CD4-positive, alpha-beta memory T cell (primary cell): ENCODE measurements at regions of chr14 and their contacts with region 1.

Region 1: GRCh38 chr14:75063407-75064213 is at the start of gene ACYP1:
- DNase-seq: peak; percentile 85 to 89 (median 87)
- H3K4me3 ChIP-seq: peak within 1 kb of the TSS; percentile 85 to 97
- H3K4me3 Mint-ChIP-seq: peak within 1 kb of the TSS; percentile 96 to 100 (median 99)
- H3K27ac ChIP-seq: peak within 1 kb of the TSS; percentile 76
- H3K27ac Mint-ChIP-seq: peak within 1 kb of the TSS; percentile 92 to 98 (median 97)
- H3K4me1 ChIP-seq: peaks cover 19% of the 10 kb centered on the region
- H3K4me1 Mint-ChIP-seq: peaks cover 16 to 42% (median 24%) of the 10 kb centered on the region in 4 donors
- H3K27me3 ChIP-seq: no peaks in the 10 kb centered on the region
- H3K27me3 Mint-ChIP-seq: no peaks in the 10 kb centered on the region
- total RNA-seq, gene ACYP1: 38.5 to 46.6 TPM

Region 2: GRCh38 chr14:75050852-75051554 is 12.6 kb before region 1 on chr14 and contains the start of gene MLH3:
- CTCF ChIA-PET with region 1: interaction called, 6 read pairs
- POLR2A ChIA-PET with region 1: interaction called, 18 read pairs
- intact Hi-C with region 1: loop called (anchors 1 kb)
- DNase-seq: peak; percentile 72 to 83 (median 79)
- H3K4me3 ChIP-seq: peak within 1 kb of the TSS; percentile 63 to 73
- H3K4me3 Mint-ChIP-seq: peak within 1 kb of the TSS; percentile 89 to 96 (median 94)
- H3K27ac ChIP-seq: peak within 1 kb of the TSS; percentile 80
- H3K27ac Mint-ChIP-seq: peak within 1 kb of the TSS; percentile 93 to 98 (median 97)
- H3K4me1 ChIP-seq: peaks cover 22% of the 10 kb centered on the region
- H3K4me1 Mint-ChIP-seq: peaks cover 14 to 41% (median 31%) of the 10 kb centered on the region in 4 donors
- H3K27me3 ChIP-seq: no peaks in the 10 kb centered on the region
- H3K27me3 Mint-ChIP-seq: no peaks in the 10 kb centered on the region
- total RNA-seq, gene MLH3: 24.9 to 26.8 TPM